OCI-LY7 (cell line): ENCODE measurements at regions of chr6 and their contacts with region 1.

Region 1: GRCh38 chr6:46921731-46922130 is at the start of gene ADGRF5:
- DNase-seq: no peak
- H3K4me3 ChIP-seq: no peak within 1 kb of the TSS
- H3K27ac ChIP-seq: no peak within 1 kb of the TSS
- H3K4me1 ChIP-seq: no peaks in the 10 kb centered on the region
- CTCF ChIP-seq: no peak
- total RNA-seq, gene ADGRF5: not detected in 2 replicates

Region 2: DNA sequence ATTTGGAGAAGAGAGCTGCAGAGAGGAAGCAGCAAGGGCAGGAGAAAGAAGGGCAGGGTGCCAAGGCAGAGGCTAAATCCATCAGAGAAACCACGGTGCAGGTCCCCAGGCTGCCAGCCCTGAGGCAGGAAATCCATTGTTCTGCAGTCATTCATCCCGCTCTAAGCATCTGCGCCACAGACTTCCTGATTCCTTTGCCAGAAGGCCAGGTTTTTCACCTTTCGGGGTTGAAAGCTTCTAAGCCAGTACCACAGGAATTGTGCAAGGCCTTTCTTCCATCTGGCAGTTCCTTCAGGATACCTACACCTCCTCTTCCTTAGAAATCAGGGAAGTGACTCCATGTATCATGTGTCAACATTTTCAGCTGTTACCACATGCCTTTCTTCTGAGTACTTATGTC is 45.6 kb before region 1 on chr6:
- CTCF ChIA-PET with region 1: no interaction called
- POLR2A ChIA-PET with region 1: interaction called, 10 read pairs
- intact Hi-C with region 1: no loop called
- DNase-seq: no peak
- H3K4me3 ChIP-seq: no peak overlapping the region
- H3K27ac ChIP-seq: no peak overlapping the region
- H3K4me1 ChIP-seq: no peaks in the 10 kb centered on the region
- CTCF ChIP-seq: no peak